ENCODE measurements at regions of chr5 and their contacts with region 1.

Region 1: GRCh38 chr5:77867194-77867691 is 91.1 kb upstream of the TBCA start:
- DNase-seq: no peak

Region 2: DNA sequence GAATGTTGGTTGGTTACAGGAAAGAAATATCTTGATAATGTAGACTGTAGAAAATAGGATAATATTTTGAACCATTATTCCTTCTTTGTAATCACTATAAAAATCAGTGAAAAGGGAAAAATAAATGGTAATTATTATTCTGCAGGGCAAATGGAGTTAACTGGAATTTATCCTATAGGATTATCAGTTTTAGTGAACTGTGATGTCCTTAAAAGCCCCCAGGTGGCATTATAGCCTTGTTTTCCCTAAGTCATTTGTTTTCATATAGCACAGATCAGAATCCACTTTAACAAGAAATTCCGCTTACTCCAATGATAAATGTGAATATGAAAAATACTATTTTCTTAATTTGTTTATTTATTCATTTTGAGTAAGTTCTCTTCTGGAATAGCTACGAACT is 348.9 kb before region 1 on chr5:
- intact Hi-C with region 1: no loop called
- DNase-seq: no peak

Region 3: DNA sequence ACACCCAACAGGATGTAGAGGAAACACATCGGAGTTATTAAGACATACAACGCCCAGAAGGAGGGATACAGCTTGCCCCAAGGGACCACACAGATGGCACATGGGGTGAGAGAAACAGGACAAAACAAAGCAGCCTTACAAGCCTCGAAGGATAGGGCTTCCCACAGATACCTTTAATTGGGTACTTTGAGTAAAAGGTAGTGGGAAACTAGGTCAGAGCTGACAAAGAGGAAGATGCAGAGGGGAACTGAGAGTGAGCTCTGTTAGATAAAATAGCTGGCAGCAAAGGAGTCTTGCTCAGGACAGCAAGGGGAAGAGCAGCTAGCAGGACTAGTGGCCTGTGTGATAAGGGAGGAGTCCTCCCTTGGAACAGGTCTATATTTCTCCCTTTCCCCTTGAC is 276.9 kb before region 1 on chr5:
- intact Hi-C with region 1: no loop called
- DNase-seq: no peak

Region 4: DNA sequence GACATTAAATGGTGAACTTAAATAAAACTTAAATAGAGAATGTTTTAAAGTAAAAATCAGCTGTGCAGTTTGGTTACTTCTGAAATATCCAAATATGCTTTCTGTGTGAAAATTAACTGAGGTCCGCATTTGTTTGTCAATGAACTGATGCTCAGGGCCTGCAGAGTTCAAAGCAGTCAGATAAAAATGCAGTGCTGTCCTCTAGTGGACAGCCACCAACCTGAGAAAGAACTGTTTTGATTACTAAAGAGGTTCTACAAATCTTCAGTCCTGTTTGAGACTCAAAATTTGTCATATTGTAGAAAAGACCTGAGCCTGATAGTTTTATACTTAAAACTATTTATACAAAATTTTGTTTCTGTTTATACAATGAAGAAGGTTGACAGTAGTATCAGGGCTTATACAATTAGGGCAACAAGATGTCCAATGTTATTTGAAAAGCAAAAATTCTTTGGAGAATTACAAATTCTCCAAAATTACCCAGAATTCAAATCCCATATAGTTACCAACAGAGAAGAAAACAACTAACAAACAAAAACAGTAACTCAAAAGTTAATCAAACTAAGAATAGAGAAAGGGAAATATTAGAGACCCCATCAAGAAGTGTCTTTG is 141.2 kb after region 1 on chr5:
- intact Hi-C with region 1: loop called (anchors 1 kb)
- DNase-seq: peak in 3 of 10 donors; percentile 41 to 75 (median 59)

Region 5: GRCh38 chr5:78162253-78162862 is 295.1 kb after region 1 on chr5:
- intact Hi-C with region 1: loop called (anchors 10 kb)
- DNase-seq: no peak

Region 6: DNA sequence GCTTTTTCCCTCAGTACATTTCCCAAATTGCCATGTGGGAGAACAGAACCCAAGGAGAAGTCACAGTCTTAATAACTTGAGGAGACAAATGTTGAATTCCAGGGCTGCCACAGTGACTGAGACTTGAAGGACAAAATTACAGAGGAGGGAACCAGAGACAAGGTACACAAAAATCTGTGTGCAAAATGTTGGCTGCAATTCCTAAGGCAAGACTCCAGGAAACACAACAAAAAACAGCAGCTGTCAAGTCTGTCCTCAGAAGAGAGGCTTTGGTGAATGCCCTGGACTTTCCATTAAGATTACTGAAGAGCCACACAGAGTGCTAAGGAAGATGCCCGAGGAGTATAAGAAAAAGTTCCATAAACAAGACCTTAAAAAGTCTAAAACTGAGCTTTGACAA is 406.2 kb after region 1 on chr5:
- intact Hi-C with region 1: loop called (anchors 10 kb)
- DNase-seq: no peak